Activated CD8-positive, alpha-beta T cell treated with anti-CD3 and anti-CD28 coated beads, Interleukin-2, amount 10 ng/mL, durations not matched to agents 7 days and 5 days (primary cell): ENCODE measurements at regions of chr12 and their contacts with region 1.

Region 1: GRCh38 chr12:49358483-49359141 is 8.7 kb upstream of the SPATS2 start:
- DNase-seq: peak; percentile 79
- ATAC-seq: peak; percentile 90
- H3K4me3 Mint-ChIP-seq: no peak overlapping the region
- H3K27ac Mint-ChIP-seq: no peak overlapping the region
- H3K4me1 Mint-ChIP-seq: peaks cover 8% of the 10 kb centered on the region
- H3K27me3 Mint-ChIP-seq: peaks cover 37% of the 10 kb centered on the region

Region 2: GRCh38 chr12:49212572-49212971 is 146.0 kb before region 1 on chr12:
- CTCF ChIA-PET with region 1: no interaction called
- POLR2A ChIA-PET with region 1: no interaction called
- DNase-seq: no peak
- ATAC-seq: no peak
- H3K4me3 Mint-ChIP-seq: no peak overlapping the region
- H3K27ac Mint-ChIP-seq: no peak overlapping the region
- H3K4me1 Mint-ChIP-seq: no peaks in the 10 kb centered on the region
- H3K27me3 Mint-ChIP-seq: peaks cover 6% of the 10 kb centered on the region

Region 3: GRCh38 chr12:49288412-49288853 is 70.2 kb before region 1 on chr12:
- CTCF ChIA-PET with region 1: interaction called, 111 read pairs
- POLR2A ChIA-PET with region 1: no interaction called
- DNase-seq: peak; percentile 82
- ATAC-seq: peak; percentile 59
- H3K4me3 Mint-ChIP-seq: no peak overlapping the region
- H3K27ac Mint-ChIP-seq: no peak overlapping the region
- H3K4me1 Mint-ChIP-seq: peaks cover 5% of the 10 kb centered on the region
- H3K27me3 Mint-ChIP-seq: peaks cover 18% of the 10 kb centered on the region

Region 4: GRCh38 chr12:49342066-49342913 is 16.3 kb before region 1 on chr12:
- CTCF ChIA-PET with region 1: interaction called, 89 read pairs
- POLR2A ChIA-PET with region 1: no interaction called
- DNase-seq: peak; percentile 84
- ATAC-seq: peak; percentile 73
- H3K4me3 Mint-ChIP-seq: peak overlapping the region; percentile 34
- H3K27ac Mint-ChIP-seq: no peak overlapping the region
- H3K4me1 Mint-ChIP-seq: peaks cover 39% of the 10 kb centered on the region
- H3K27me3 Mint-ChIP-seq: peaks cover 88% of the 10 kb centered on the region

Region 5: DNA sequence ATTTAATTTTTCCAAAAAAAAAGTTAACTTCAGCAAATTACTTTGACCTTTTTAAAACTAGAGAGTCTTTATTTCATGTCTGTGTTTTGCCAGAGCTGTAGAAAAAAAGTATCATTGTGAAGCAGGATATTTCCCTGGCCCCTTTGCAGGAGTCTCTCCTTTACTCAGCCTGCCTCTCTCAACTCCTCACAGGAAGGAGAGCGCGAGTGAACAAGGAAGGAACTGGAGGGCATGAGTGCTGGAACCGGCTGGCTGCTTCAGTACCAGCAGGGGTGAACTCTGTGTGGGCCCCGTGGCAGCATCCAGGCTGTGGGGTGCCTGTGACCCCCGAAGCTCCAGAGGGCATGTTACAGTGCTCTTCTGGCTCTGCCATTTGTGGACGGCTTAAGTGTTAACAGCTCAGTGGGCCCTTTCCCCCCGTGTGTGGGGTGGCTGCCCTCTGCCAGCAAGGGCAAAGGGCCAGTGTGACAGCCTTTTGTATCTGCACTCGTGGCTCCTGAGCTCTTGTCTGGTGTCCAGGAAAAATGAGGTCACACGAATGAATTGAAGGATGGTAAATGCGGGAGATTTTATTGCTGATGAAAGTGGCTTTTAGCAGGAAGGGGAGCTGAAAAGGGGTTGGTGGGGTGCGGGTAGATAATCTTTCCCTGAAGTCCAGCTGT is 103.6 kb after region 1 on chr12:
- CTCF ChIA-PET with region 1: interaction called, 18 read pairs
- POLR2A ChIA-PET with region 1: no interaction called
- DNase-seq: no peak
- ATAC-seq: no peak
- H3K4me3 Mint-ChIP-seq: no peak overlapping the region
- H3K27ac Mint-ChIP-seq: no peak overlapping the region
- H3K4me1 Mint-ChIP-seq: no peaks in the 10 kb centered on the region
- H3K27me3 Mint-ChIP-seq: no peaks in the 10 kb centered on the region

Region 6: GRCh38 chr12:49527361-49528130 is 168.9 kb after region 1 on chr12:
- CTCF ChIA-PET with region 1: interaction called, 45 read pairs
- POLR2A ChIA-PET with region 1: no interaction called
- DNase-seq: no peak
- ATAC-seq: no peak
- H3K4me3 Mint-ChIP-seq: no peak overlapping the region
- H3K27ac Mint-ChIP-seq: no peak overlapping the region
- H3K4me1 Mint-ChIP-seq: peaks cover 3% of the 10 kb centered on the region
- H3K27me3 Mint-ChIP-seq: peaks cover under 1% of the 10 kb centered on the region

Region 7: GRCh38 chr12:49580572-49581535 is 222.2 kb after region 1 on chr12:
- CTCF ChIA-PET with region 1: interaction called, 62 read pairs
- POLR2A ChIA-PET with region 1: interaction called, 4 read pairs
- DNase-seq: peak; percentile 77
- ATAC-seq: peak; percentile 92
- H3K4me3 Mint-ChIP-seq: no peak overlapping the region
- H3K27ac Mint-ChIP-seq: no peak overlapping the region
- H3K4me1 Mint-ChIP-seq: peaks cover 14% of the 10 kb centered on the region
- H3K27me3 Mint-ChIP-seq: no peaks in the 10 kb centered on the region